ENCODE measurements at regions of chr15 and their contacts with region 1.

Region 1: DNA sequence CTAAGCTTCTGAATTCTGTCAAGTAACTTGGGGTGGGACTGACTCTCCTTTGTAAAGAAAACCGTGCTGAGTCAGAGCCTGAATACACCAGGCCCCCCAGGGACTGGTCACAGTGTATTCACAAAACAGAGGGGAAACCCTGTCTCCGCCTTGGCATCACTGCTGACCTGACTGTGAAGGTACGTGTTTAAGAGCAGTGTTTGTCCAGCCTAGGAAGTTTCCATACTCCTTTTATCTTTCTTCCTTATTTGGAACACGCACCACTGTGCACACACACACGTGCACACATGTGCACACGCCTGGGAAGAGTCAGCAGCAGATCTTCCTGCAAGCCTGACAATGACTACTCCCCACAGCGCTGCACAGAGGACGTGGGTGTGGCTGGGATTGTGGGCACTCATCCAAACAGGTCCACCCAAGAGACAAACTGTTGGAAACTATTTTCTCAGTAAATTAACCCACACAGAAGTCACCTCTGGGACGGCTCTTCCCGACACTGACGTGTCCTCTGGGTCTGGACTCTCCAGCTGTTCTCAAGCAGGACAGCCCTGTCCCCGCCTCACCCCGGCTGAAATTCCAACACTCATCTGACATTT is 87.7 kb downstream of the ATP10A start:
- DNase-seq: peak; percentile 34 to 86 (median 67)
- H3K4me3 ChIP-seq: no peak overlapping the region
- H3K27ac ChIP-seq: peak overlapping the region in 4 of 5 donors; percentile 6 to 84 (median 34)
- H3K4me1 ChIP-seq: peaks cover 0 to 4% of the 10 kb centered on the region in 2 donors
- H3K27me3 ChIP-seq: no peaks in the 10 kb centered on the region
- CTCF ChIP-seq: no peak
- POLR2A ChIP-seq: no peak

Region 2: DNA sequence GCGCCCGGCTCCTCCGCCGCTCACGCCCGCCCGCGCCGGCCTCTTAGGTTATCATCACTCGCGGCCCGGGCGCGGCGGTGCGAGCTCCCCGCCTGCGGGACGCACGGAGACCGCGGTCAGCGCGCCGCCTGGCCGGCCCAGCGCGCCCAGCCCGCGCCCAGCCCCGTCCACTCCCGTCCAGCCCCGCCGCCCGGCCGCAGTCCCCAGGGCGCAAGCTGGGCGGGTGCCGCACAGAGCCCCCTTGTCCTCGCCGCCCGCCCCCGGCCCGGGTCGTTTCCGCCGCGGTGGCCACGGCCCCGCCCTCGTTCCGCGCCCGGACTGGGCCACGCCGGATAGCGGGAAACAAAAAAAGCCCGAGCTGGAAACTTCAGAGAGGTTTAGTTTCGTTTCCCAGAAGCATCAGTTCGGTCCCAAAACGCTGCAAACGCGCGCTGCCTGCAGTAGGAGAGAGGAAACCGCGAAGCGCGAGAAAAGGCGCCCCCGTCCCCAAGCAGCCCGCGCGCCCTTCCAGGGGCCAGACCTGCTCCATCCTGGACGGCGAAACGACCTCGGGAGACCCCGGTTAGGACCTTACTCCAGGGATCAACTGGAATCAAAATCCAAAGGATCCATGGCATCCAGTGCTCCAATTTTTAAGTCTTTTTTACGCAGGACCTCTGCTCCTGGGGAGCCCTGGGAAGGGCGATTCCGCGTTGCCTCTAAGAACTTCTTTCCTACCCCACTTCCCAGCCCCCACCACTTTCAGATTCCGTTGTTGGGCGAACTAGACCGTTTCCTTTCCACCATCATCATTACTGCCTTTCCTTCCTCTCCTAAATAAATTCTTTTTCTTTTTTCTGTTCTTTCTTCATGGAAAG is 87.9 kb after region 1 on chr15 and contains the start of gene ATP10A:
- intact Hi-C with region 1: loop called in 1 of 2 experiments (anchors 10 kb)
- DNase-seq: peak in 3 of 7 donors; percentile 18 to 38 (median 24)
- H3K4me3 ChIP-seq: peak within 1 kb of the TSS in 3 of 4 donors; percentile 33 to 76 (median 51)
- H3K27ac ChIP-seq: peak within 1 kb of the TSS in 4 of 5 donors; percentile 1 to 75 (median 58)
- H3K4me1 ChIP-seq: peaks cover 0 to 4% of the 10 kb centered on the region in 2 donors
- H3K27me3 ChIP-seq: peaks cover 8% of the 10 kb centered on the region
- CTCF ChIP-seq: no peak
- POLR2A ChIP-seq: peak in 1 of 2 donors; percentile 10
- total RNA-seq, gene ATP10A: 0.67 to 31.8 (median 17.1) TPM

Measured in adrenal gland (tissue), 19 donors.